Activated CD4-positive, alpha-beta memory T cell treated with anti-CD3 and anti-CD28 coated beads for 36 hours (primary cell): ENCODE measurements at regions of chr17 and their contacts with region 1.

Region 1: DNA sequence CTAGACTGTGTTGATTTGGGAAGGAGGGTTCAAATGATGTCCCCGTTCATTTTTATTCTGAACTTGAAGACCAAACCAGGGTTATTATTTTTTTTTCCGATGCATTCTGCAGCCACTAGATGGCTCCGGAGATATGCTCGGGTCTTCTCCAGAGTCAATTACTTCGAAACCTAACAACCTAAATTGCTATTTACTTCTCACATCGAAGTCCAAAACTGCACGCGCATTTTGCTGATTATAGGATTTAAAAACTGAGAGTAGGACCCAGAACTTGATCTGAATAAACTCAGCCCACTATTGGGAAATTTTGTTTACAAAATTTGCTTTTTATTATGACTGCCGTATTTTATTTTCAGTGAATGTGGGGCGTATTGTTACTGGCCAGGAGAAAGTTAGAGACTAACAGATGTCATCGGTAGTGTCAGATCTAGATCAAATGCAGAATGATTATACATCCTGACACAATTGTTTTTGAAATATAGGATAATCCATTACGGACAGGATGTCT is 263.8 kb downstream of the HS3ST3A1 start:
- DNase-seq: peak; percentile 14
- H3K4me3 Mint-ChIP-seq: no peak overlapping the region
- H3K27ac Mint-ChIP-seq: no peak overlapping the region
- H3K4me1 Mint-ChIP-seq: peaks cover 4% of the 10 kb centered on the region
- H3K27me3 Mint-ChIP-seq: peaks cover 33% of the 10 kb centered on the region

Region 2: GRCh38 chr17:13273806-13274205 is 64.1 kb before region 1 on chr17:
- CTCF ChIA-PET with region 1: no interaction called
- POLR2A ChIA-PET with region 1: no interaction called
- intact Hi-C with region 1: no loop called
- DNase-seq: no peak
- H3K4me3 Mint-ChIP-seq: no peak overlapping the region
- H3K27ac Mint-ChIP-seq: no peak overlapping the region
- H3K4me1 Mint-ChIP-seq: no peaks in the 10 kb centered on the region
- H3K27me3 Mint-ChIP-seq: peaks cover 7% of the 10 kb centered on the region

Region 3: GRCh38 chr17:14926526-14927122 is 1588.7 kb after region 1 on chr17:
- CTCF ChIA-PET with region 1: interaction called, 4 read pairs
- POLR2A ChIA-PET with region 1: no interaction called
- intact Hi-C with region 1: loop called (anchors 2 kb)
- DNase-seq: peak; percentile 57
- H3K4me3 Mint-ChIP-seq: no peak overlapping the region
- H3K27ac Mint-ChIP-seq: no peak overlapping the region
- H3K4me1 Mint-ChIP-seq: no peaks in the 10 kb centered on the region
- H3K27me3 Mint-ChIP-seq: peaks cover 4% of the 10 kb centered on the region